MCF 10A (cell line): ENCODE measurements at regions of chr4 and their contacts with region 1.

Region 1: GRCh38 chr4:38179690-38180377 is 219.6 kb downstream of the PTTG2 start:
- DNase-seq: peak; percentile 82
- H3K4me3 Mint-ChIP-seq: no peak overlapping the region
- H3K27ac Mint-ChIP-seq: peak overlapping the region; percentile 25
- H3K4me1 Mint-ChIP-seq: peaks cover 33% of the 10 kb centered on the region
- H3K27me3 Mint-ChIP-seq: no peaks in the 10 kb centered on the region
- CTCF ChIP-seq: peak; percentile 89

Region 2: GRCh38 chr4:38069271-38069760 is 110.5 kb before region 1 on chr4:
- CTCF ChIA-PET with region 1: interaction called, 22 read pairs
- POLR2A ChIA-PET with region 1: no interaction called
- intact Hi-C with region 1: no loop called
- DNase-seq: peak; percentile 16
- H3K4me3 Mint-ChIP-seq: no peak overlapping the region
- H3K27ac Mint-ChIP-seq: no peak overlapping the region
- H3K4me1 Mint-ChIP-seq: peaks cover 7% of the 10 kb centered on the region
- H3K27me3 Mint-ChIP-seq: no peaks in the 10 kb centered on the region
- CTCF ChIP-seq: peak; percentile 18

Region 3: GRCh38 chr4:38169524-38169923 is 10.3 kb before region 1 on chr4:
- CTCF ChIA-PET with region 1: interaction called, 14 read pairs
- POLR2A ChIA-PET with region 1: no interaction called
- intact Hi-C with region 1: no loop called
- DNase-seq: no peak
- H3K4me3 Mint-ChIP-seq: no peak overlapping the region
- H3K27ac Mint-ChIP-seq: peak overlapping the region; percentile 53
- H3K4me1 Mint-ChIP-seq: peaks cover 22% of the 10 kb centered on the region
- H3K27me3 Mint-ChIP-seq: no peaks in the 10 kb centered on the region
- CTCF ChIP-seq: peak; percentile 31

Region 4: DNA sequence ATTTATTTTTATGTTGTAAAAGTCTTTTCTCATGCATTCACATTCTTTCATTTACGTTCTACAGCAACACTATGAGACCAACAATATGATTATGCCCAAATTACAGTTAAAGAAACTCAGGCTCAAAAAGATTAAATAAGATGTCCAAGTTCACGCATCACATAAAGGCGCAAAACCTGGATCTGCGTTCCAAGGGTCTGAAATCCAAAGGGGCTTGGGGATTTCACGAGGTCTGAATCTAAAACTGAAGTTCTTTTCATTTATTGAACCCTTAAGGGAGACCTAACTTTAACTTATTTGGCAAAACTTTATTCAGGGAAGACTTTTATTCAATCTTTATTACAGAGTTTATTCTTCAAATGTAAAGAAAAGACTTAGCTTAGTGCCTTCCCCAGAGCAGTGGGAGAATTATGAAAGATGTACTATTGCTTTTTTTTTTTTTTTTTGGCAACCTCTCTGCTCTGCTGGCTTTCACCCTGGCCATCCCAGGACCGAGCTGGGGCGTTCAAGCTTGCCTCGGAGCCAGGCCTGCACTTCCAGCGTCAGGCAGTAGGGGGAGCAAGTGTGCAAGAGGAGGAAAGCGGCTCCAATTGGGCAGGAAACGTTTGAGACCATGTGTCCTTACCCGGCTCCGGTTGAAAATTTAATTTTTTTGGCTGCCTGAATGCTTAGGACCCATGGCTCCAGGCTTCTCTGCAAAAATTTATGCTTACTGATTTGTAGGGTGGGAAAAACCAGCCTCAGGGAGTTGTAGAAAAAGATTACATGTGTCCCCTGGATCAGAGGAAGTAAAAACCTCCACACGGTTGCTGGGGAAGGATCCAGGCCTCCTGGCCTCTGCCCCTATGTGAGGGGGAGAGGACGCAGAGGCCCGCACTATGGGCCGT is 139.9 kb after region 1 on chr4:
- CTCF ChIA-PET with region 1: interaction called, 64 read pairs
- POLR2A ChIA-PET with region 1: interaction called, 13 read pairs
- intact Hi-C with region 1: loop called (anchors 1 kb)
- DNase-seq: peak; percentile 95
- H3K4me3 Mint-ChIP-seq: peak overlapping the region; percentile 23
- H3K27ac Mint-ChIP-seq: peak overlapping the region; percentile 88
- H3K4me1 Mint-ChIP-seq: peaks cover 28% of the 10 kb centered on the region
- H3K27me3 Mint-ChIP-seq: no peaks in the 10 kb centered on the region
- CTCF ChIP-seq: peak; percentile 96

Region 5: DNA sequence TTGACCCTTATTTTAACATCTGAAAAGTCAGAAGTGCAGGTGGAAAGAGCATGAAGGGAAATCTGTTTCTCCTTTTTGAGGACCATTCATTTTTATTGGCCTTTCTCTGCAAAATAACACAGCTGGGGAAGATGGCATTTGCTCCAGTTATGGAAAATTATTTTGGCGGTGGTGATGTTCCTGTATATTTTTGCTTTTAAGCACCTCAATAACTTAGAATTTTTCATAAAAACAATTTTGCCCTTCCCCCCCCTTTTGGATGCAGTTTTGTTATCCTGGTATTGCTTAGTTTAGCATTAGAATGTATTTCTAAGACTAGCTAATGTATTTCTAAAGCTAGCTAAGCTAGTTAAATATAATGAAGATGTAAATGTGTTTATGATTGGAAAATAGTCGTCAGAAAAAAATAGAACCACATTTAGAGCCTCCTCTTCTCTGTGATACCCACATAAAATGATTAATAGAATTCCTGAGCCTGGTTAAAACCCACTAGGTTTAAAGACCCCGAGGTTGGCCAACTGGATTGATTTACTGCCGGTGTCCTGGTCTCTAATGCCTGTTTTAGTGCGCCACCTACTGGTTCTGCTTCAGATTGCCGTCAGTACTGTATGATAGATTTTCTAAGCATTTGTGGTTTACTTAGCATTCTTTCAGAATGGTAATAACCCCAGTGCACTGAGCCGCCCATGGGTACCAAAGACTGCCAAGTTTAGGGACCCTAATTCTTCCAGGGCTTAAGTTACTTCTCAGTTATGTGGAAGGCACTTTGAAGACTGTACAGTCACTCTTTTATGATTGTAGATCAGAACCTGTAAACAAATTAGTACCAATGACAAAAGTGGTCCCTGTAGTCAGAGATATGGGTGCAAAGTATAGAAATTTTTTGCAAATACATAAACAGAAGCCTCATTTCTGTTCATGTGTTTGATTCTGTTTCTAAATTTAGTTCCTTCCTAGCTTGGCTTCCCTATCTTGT is 495.6 kb after region 1 on chr4:
- CTCF ChIA-PET with region 1: interaction called, 71 read pairs
- POLR2A ChIA-PET with region 1: interaction called, 22 read pairs
- intact Hi-C with region 1: loop called (anchors 1 kb)
- DNase-seq: peak; percentile 87
- H3K4me3 Mint-ChIP-seq: peak overlapping the region; percentile 45
- H3K27ac Mint-ChIP-seq: no peak overlapping the region
- H3K4me1 Mint-ChIP-seq: peaks cover 68% of the 10 kb centered on the region
- H3K27me3 Mint-ChIP-seq: no peaks in the 10 kb centered on the region
- CTCF ChIP-seq: peak; percentile 84

Region 6: GRCh38 chr4:38730830-38731646 is 551.2 kb after region 1 on chr4:
- CTCF ChIA-PET with region 1: interaction called, 145 read pairs
- POLR2A ChIA-PET with region 1: interaction called, 11 read pairs
- intact Hi-C with region 1: loop called (anchors 1 kb)
- DNase-seq: peak; percentile 81
- H3K4me3 Mint-ChIP-seq: no peak overlapping the region
- H3K27ac Mint-ChIP-seq: no peak overlapping the region
- H3K4me1 Mint-ChIP-seq: peaks cover 16% of the 10 kb centered on the region
- H3K27me3 Mint-ChIP-seq: no peaks in the 10 kb centered on the region
- CTCF ChIP-seq: peak; percentile 97